Activated CD4-positive, alpha-beta memory T cell treated with anti-CD3 and anti-CD28 coated beads, Interleukin-2, amount 10 ng/mL, durations not matched to agents 7 days and 5 days (primary cell): ENCODE measurements at regions of chrX and their contacts with region 1.

Region 1: GRCh38 chrX:120560842-120561633 is at the start of gene CUL4B:
- DNase-seq: peak; percentile 94
- H3K4me3 Mint-ChIP-seq: peak within 1 kb of the TSS; percentile 95
- H3K27ac Mint-ChIP-seq: peak within 1 kb of the TSS; percentile 95
- H3K4me1 Mint-ChIP-seq: peaks cover 24% of the 10 kb centered on the region
- H3K27me3 Mint-ChIP-seq: no peaks in the 10 kb centered on the region
- total RNA-seq, gene CUL4B: 45.5 to 46.1 TPM

Region 2: GRCh38 chrX:120512627-120513026 is 48.4 kb before region 1 on chrX:
- CTCF ChIA-PET with region 1: no interaction called
- POLR2A ChIA-PET with region 1: no interaction called
- DNase-seq: no peak
- H3K4me3 Mint-ChIP-seq: no peak overlapping the region
- H3K27ac Mint-ChIP-seq: no peak overlapping the region
- H3K4me1 Mint-ChIP-seq: no peaks in the 10 kb centered on the region
- H3K27me3 Mint-ChIP-seq: no peaks in the 10 kb centered on the region

Region 3: GRCh38 chrX:120629667-120630537 is 68.9 kb after region 1 on chrX and contains the start of gene C1GALT1C1:
- CTCF ChIA-PET with region 1: no interaction called
- POLR2A ChIA-PET with region 1: interaction called, 42 read pairs
- DNase-seq: peak; percentile 92
- H3K4me3 Mint-ChIP-seq: peak within 1 kb of the TSS; percentile 83
- H3K27ac Mint-ChIP-seq: peak within 1 kb of the TSS; percentile 94
- H3K4me1 Mint-ChIP-seq: peaks cover 32% of the 10 kb centered on the region
- H3K27me3 Mint-ChIP-seq: no peaks in the 10 kb centered on the region
- total RNA-seq, gene C1GALT1C1: 34.9 to 35.5 TPM

Region 4: DNA sequence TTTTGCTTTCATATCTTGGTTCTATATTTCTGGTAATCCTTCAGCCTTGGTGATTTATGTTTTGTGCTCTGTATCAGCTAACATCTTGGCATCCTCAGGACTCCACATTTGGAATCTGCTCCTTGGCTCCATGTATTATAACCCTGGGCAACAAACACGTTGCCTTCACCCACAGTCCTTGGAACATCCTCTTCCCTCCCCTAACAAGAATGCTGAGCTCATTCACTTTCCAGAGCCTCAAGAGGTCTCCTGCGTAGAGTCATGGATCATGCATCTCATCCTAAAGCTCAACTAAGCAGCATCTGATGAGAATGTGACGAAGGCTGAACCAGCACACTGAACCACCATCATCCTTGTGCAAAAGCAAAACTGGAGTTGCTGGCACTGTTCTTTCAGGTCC is 129.3 kb after region 1 on chrX:
- CTCF ChIA-PET with region 1: no interaction called
- POLR2A ChIA-PET with region 1: no interaction called
- DNase-seq: no peak
- H3K4me3 Mint-ChIP-seq: no peak overlapping the region
- H3K27ac Mint-ChIP-seq: no peak overlapping the region
- H3K4me1 Mint-ChIP-seq: no peaks in the 10 kb centered on the region
- H3K27me3 Mint-ChIP-seq: no peaks in the 10 kb centered on the region